ENCODE measurements at regions of chr6 and their contacts with region 1.

Region 1: GRCh38 chr6:147506704-147507114 is 1.8 kb upstream of the SAMD5 start:
- DNase-seq: peak; percentile 75 to 92 (median 88)
- ATAC-seq: peak; percentile 60
- H3K4me3 ChIP-seq: no peak overlapping the region
- H3K4me1 ChIP-seq: peaks cover 11% of the 10 kb centered on the region
- CTCF ChIP-seq: peak; percentile 58

Region 2: DNA sequence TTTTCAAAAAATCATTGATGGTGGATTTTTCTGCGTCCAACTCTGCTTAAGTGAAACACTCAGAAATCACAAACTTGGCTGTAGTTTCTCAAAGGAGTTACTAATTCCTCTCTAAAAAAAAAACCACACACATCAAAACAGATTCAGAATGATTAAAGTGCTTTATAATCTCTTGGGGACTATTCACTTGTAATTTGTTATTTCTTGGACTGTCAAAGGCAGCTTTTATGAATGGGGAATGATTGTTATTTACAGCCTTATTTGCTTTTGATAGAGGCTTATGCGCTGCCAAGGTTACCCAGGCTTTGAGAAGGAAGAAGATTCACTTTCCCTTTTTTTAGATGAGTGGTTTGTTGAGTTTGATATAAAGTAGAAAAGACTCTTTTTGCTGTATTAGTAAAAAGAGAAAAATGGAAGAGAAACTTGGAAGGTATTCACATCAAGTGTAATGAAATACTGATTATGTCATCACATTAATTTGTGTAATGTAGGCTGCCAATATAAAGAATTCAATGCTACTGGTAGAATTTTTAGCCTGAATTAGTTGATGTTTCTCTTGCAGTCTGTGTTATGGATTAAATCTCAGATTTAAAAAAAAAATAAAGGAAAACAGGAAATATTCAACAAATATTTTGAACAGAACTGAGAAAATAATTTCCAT is 454.9 kb after region 1 on chr6:
- intact Hi-C with region 1: loop called in 1 of 2 experiments (anchors 10 kb)
- DNase-seq: no peak
- ATAC-seq: no peak
- H3K4me3 ChIP-seq: no peak overlapping the region
- H3K4me1 ChIP-seq: no peaks in the 10 kb centered on the region
- CTCF ChIP-seq: no peak

Region 3: GRCh38 chr6:148166339-148166968 is 659.7 kb after region 1 on chr6:
- intact Hi-C with region 1: loop called (anchors 2 to 5 kb)
- DNase-seq: peak in 1 of 3 donors; percentile 32
- ATAC-seq: no peak
- H3K4me3 ChIP-seq: no peak overlapping the region
- H3K4me1 ChIP-seq: no peaks in the 10 kb centered on the region
- CTCF ChIP-seq: no peak